PC-3 (cell line): ENCODE measurements at regions of chr7 and their contacts with region 1.

Region 1: GRCh38 chr7:98841179-98841997 is 28.4 kb downstream of the TMEM130 start:
- DNase-seq: peak; percentile 69
- ATAC-seq: peak; percentile 75
- H3K4me3 ChIP-seq: no peak overlapping the region
- H3K27ac ChIP-seq: no peak overlapping the region
- H3K4me1 ChIP-seq: no peaks in the 10 kb centered on the region
- H3K27me3 ChIP-seq: no peaks in the 10 kb centered on the region
- CTCF ChIP-seq: peak; percentile 90

Region 2: DNA sequence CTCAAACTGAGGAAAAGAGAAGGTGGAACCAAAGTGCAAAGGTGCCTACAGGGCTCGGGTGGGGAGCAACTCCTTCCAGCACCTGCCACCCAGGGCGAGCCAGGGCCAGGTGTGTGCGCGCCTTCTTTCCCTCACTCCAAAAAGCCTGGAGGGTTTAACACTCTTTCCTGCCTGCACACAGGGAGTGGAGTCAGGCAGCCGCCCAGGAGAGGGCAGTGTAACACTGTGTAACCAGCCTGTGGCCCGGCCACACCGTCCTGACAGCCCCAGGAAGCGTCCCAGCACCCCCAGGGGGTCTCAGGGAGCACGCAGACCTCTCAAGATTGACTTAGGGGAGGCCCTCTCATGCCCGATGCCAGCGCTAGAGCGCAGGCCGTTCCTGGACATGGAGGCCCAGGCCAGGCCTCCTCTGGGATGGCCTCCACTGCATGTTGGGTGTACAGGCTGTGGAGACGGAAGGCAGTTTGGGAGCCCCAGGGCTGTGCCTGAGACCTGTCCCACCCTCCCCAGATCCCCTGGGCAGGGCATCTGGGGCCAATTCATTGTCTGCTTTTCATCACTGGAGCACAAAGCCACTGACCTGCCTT is 546.5 kb before region 1 on chr7:
- CTCF ChIA-PET with region 1: no interaction called
- POLR2A ChIA-PET with region 1: no interaction called
- intact Hi-C with region 1: loop called (anchors 10 kb)
- DNase-seq: peak; percentile 73
- ATAC-seq: peak; percentile 93
- H3K4me3 ChIP-seq: no peak overlapping the region
- H3K27ac ChIP-seq: no peak overlapping the region
- H3K4me1 ChIP-seq: no peaks in the 10 kb centered on the region
- H3K27me3 ChIP-seq: no peaks in the 10 kb centered on the region
- CTCF ChIP-seq: peak; percentile 90

Region 3: GRCh38 chr7:98420966-98421612 is 420.3 kb before region 1 on chr7:
- CTCF ChIA-PET with region 1: no interaction called
- POLR2A ChIA-PET with region 1: no interaction called
- intact Hi-C with region 1: loop called (anchors 2 kb)
- DNase-seq: peak; percentile 90
- ATAC-seq: peak; percentile 53
- H3K4me3 ChIP-seq: no peak overlapping the region
- H3K27ac ChIP-seq: no peak overlapping the region
- H3K4me1 ChIP-seq: peaks cover 33% of the 10 kb centered on the region
- H3K27me3 ChIP-seq: no peaks in the 10 kb centered on the region
- CTCF ChIP-seq: peak; percentile 96

Region 4: DNA sequence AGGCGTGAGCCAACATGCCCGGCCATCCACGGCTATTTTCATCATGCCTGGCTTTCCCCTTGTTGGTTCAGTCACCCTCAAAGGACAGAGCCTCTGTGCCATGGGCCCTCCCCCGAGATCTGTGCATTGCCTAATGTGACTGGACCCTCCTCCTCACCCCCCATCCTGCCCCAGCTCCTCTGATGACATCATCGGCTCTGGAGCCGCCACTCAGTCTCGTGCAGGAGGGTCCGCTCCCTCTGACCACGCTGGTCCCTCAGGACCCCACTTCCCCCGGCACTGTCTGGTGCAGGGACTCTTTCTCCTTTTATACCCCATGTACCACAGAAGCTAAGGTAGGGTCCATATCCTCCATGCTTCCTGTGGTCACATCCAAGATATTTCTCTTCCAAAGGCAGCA is 407.3 kb before region 1 on chr7:
- CTCF ChIA-PET with region 1: no interaction called
- POLR2A ChIA-PET with region 1: no interaction called
- intact Hi-C with region 1: loop called (anchors 1 kb)
- DNase-seq: no peak
- ATAC-seq: no peak
- H3K4me3 ChIP-seq: no peak overlapping the region
- H3K27ac ChIP-seq: no peak overlapping the region
- H3K4me1 ChIP-seq: no peaks in the 10 kb centered on the region
- H3K27me3 ChIP-seq: 0 out of 2 replicates have a peak, but pooled peaks cover 5% of the 10 kb centered on the region
- CTCF ChIP-seq: no peak

Region 5: DNA sequence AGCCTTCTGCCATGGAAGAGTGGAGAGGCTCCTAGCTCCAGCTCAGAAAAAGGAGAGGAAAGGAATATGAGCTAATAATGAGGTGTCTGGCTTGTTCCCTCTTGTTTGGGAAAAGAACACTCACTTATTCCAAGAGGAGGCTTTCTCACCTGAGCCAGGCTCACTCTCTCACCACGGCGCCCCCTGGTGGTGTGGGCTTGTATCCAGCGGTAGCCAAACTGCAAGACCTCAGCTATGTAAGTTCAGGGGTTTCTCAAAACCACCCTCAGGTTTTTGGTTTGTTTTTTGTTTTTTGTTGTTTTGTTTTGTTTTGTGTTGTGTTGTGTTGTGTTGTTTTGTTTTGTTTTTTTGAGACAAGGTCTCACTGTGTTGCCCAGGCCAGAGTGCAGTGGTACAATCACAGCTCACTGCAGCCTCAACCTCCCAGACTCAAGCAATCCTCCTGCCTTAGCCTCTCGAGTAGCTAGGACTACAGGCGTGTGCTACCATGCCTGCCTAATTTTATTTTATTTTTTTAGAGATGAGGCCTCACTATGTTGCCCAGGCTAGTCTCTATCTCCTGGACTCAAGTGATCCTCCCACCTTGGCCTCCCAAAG is 95.6 kb before region 1 on chr7:
- CTCF ChIA-PET with region 1: no interaction called
- POLR2A ChIA-PET with region 1: no interaction called
- intact Hi-C with region 1: loop called (anchors 5 kb)
- DNase-seq: peak; percentile 81
- ATAC-seq: peak; percentile 80
- H3K4me3 ChIP-seq: no peak overlapping the region
- H3K27ac ChIP-seq: no peak overlapping the region
- H3K4me1 ChIP-seq: no peaks in the 10 kb centered on the region
- H3K27me3 ChIP-seq: peaks cover 12% of the 10 kb centered on the region; the same call in 1 of the 2 replicates
- CTCF ChIP-seq: peak; percentile 83

Region 6: DNA sequence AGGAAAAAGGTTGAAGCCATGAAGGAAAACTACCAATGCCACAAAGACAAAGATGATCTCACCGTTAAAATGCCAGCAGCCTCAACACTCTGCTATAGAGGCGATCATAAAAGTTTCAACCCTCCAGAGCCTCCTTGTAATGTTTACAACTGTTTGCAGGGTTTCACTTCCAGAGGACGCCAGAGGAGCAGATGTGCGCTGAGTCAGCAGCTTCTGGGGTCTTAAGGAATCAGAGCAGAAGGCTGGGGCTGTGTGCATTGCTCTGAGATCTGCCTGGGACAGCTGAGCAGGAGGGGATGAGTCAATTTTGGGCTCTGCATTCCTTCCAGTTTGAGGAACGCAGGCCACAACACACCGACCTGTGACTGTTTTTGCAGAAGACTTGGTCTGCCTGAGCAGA is 69.9 kb before region 1 on chr7:
- CTCF ChIA-PET with region 1: no interaction called
- POLR2A ChIA-PET with region 1: no interaction called
- intact Hi-C with region 1: no loop called
- DNase-seq: no peak
- ATAC-seq: no peak
- H3K4me3 ChIP-seq: no peak overlapping the region
- H3K27ac ChIP-seq: no peak overlapping the region
- H3K4me1 ChIP-seq: no peaks in the 10 kb centered on the region
- H3K27me3 ChIP-seq: peaks cover 14% of the 10 kb centered on the region
- CTCF ChIP-seq: no peak